ENCODE measurements at regions of chr12 and their contacts with region 1.

Region 1: DNA sequence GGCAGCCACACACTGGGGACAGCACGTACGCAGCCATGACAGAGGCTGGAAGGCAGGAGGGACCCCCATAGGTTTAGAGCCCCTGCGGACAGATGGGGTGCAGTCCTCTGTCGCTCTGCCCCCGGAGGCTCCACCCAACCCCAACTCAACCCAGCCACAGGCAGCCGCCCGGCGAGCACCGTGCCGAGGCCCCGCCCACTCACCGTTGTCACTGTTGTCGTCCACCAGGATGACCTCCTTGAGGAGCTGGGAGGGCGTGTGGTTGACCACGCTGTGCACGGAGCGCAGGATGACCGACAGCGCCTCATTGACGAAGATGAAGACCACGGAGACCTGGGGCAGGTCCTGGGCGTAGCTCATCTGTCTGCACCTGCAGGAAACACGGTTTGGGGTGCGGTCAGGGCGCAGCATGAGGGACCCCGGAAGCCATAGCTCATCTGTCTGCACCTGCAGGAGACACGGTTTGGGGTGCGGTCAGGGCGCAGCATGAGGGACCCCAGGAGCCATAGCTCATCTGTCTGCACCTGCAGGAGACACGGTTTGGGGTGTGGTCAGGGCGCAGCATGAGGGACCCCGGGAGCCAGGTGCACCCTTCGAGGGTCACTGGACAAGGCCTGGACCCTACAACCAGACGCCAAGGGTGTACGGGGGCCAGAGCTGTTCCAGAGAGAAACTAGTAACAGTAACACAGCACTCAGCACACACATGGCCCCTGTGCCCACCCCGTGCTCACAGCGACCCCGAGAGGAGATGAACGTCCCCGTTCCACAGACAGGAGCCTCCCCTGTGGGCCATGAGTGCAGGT is 66.9 kb downstream of the GALNT9 start:
- DNase-seq: peak; percentile 33
- ATAC-seq: no peak
- H3K4me3 ChIP-seq: peak overlapping the region in 1 of 5 experiments; percentile 12
- H3K4me3 Mint-ChIP-seq: peak overlapping the region; percentile 19
- H3K27ac ChIP-seq: no peak overlapping the region
- H3K27ac Mint-ChIP-seq: no peak overlapping the region
- H3K4me1 ChIP-seq: peaks cover 0 to 21% of the 10 kb centered on the region in 2 donors
- H3K4me1 Mint-ChIP-seq: no peaks in the 10 kb centered on the region
- H3K27me3 ChIP-seq: no peaks in the 10 kb centered on the region
- H3K27me3 Mint-ChIP-seq: peaks cover 2% of the 10 kb centered on the region
- CTCF ChIP-seq: no peak

Region 2: DNA sequence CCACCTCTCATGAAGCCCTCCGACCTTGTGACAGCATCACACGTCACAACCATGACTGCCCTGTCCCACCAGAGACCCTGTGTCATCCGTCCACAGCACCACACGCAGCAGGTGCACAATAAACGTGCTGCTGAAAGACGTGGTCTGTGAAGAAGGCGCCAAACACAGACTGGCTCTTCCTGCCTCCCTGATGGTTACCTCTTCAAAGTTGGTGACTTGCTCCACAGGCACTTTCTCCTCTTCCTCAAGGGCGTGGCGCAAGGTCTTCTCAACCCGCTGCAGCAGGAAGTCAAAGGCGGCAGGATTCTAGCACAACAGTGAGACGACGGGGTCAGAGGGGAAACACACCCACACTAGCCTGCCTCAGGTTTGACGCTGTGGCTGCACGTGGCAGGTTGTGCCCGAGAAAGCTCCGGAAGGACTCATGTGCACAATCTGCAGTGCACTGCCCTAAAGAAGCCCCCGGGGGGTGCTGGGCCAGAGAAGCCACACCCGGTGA is 409.6 kb after region 1 on chr12:
- CTCF ChIA-PET with region 1: no interaction called
- POLR2A ChIA-PET with region 1: interaction called, 10 read pairs
- intact Hi-C with region 1: no loop called
- DNase-seq: no peak
- ATAC-seq: no peak
- H3K4me3 ChIP-seq: no peak overlapping the region
- H3K4me3 Mint-ChIP-seq: no peak overlapping the region
- H3K27ac ChIP-seq: no peak overlapping the region
- H3K27ac Mint-ChIP-seq: no peak overlapping the region
- H3K4me1 ChIP-seq: no peaks in the 10 kb centered on the region
- H3K4me1 Mint-ChIP-seq: no peaks in the 10 kb centered on the region
- H3K27me3 ChIP-seq: no peaks in the 10 kb centered on the region
- H3K27me3 Mint-ChIP-seq: no peaks in the 10 kb centered on the region
- CTCF ChIP-seq: no peak